B cell (primary cell): ENCODE measurements at regions of chr10 and their contacts with region 1.

Region 1: DNA sequence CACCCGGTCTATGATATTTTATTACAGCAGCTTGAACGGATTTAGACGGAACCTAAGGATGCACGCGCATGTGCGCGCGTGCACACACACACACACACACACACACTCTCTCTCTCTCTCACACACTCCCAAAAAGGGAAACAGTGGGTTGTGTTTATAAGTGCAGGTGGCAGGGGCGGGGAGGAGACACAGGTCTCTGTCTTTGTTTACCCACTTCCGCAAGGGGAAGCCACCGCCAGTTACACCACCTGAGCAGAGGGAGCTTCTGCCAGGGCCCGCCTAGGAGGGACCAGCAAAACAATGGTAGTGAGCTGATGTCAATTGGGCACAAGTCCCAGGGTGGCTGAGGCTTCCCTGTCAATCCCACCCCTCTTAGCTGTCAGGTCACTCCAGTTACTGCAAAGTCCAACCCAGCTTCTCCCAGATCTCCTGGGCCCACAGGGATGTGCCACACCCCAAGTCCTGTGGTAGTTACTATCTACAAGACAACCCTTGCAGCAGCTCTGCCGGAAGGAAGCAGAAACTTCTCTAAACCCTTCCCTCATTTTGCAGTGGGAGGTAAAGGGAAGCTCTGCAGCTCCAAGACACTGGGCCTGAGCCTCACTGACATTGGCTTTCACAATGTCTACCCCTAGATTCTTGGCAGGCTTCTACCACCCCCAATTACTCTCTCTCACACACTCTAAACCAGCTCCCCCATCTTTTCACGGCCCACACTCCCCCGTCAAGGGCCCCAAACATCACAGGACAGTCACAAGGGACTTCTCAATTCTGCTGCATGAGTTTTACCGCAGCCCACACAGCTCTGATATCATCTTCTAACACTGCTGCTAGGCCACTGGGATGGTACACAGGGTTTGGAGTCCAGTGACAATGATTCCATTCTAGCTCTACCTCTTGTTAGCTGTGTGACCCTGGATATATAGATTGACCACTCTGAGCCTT is 17.6 kb downstream of the ANXA11 start:
- DNase-seq: peak; percentile 94
- ATAC-seq: peak; percentile 91
- H3K4me3 ChIP-seq: peak overlapping the region; percentile 20 to 63 (median 43)
- H3K4me3 Mint-ChIP-seq: peak overlapping the region; percentile 78
- H3K27ac ChIP-seq: peak overlapping the region; percentile 94 to 96
- H3K27ac Mint-ChIP-seq: peak overlapping the region; percentile 94
- H3K4me1 ChIP-seq: peaks cover 63% of the 10 kb centered on the region in 2 donors
- H3K4me1 Mint-ChIP-seq: peaks cover 79% of the 10 kb centered on the region
- H3K27me3 ChIP-seq: no peaks in the 10 kb centered on the region
- H3K27me3 Mint-ChIP-seq: no peaks in the 10 kb centered on the region
- CTCF ChIP-seq: no peak

Region 2: GRCh38 chr10:79310911-79311573 is 876.7 kb before region 1 on chr10:
- CTCF ChIA-PET with region 1: no interaction called
- POLR2A ChIA-PET with region 1: no interaction called
- intact Hi-C with region 1: no loop called
- DNase-seq: no peak
- ATAC-seq: no peak
- H3K4me3 ChIP-seq: no peak overlapping the region
- H3K4me3 Mint-ChIP-seq: no peak overlapping the region
- H3K27ac ChIP-seq: no peak overlapping the region
- H3K27ac Mint-ChIP-seq: no peak overlapping the region
- H3K4me1 ChIP-seq: no peaks in the 10 kb centered on the region
- H3K4me1 Mint-ChIP-seq: peaks cover 3% of the 10 kb centered on the region
- H3K27me3 ChIP-seq: no peaks in the 10 kb centered on the region
- H3K27me3 Mint-ChIP-seq: no peaks in the 10 kb centered on the region
- CTCF ChIP-seq: no peak

Region 3: DNA sequence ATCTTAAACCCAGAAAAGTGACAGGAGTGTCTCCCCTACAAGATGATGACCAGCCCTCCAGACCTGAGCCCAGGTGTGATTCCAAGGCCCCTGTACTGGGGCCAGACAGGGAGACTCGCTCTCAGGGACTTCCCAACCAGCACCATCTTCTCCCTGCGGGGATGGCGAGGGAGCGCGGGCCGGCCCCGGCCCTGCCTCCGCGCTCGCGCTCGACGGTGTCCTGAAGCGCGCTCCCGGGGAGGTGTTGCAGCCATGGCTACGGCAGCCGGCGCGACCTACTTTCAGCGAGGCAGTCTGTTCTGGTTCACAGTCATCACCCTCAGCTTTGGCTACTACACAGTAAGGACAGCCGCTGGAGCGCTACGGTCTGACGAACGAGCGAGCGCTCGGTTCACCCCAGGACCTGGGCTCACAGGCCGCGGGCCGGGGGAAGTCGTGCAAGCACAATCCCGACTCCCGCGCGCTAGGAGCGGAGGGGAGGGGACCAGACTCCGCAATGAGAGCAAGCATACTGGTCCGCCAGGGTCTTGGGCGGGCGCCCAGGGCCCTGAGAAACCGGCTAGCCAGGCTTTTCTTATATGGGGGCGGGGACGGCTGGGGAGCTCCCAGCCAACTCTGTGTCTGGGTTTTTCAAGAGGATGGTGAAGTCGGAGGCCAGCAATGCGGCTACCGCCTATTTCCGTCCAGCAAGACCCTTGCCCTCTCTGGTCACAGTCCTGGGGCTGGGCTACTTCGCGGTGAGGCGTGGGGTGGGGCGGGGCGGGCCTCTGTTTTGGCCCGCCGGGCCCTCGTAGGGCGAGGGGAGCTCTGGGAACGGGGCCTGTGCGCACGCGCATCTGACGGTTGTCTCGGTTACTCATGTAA is 109.1 kb before region 1 on chr10 and contains the start of gene TMEM254:
- CTCF ChIA-PET with region 1: no interaction called
- POLR2A ChIA-PET with region 1: interaction called, 5 read pairs
- intact Hi-C with region 1: loop called (anchors 1 kb)
- DNase-seq: peak; percentile 92
- ATAC-seq: peak; percentile 86
- H3K4me3 ChIP-seq: peak within 1 kb of the TSS; percentile 74 to 98 (median 97)
- H3K4me3 Mint-ChIP-seq: peak within 1 kb of the TSS; percentile 97
- H3K27ac ChIP-seq: peak within 1 kb of the TSS; percentile 84 to 90
- H3K27ac Mint-ChIP-seq: peak within 1 kb of the TSS; percentile 92
- H3K4me1 ChIP-seq: peaks cover 11 to 15% of the 10 kb centered on the region in 2 donors
- H3K4me1 Mint-ChIP-seq: peaks cover 16% of the 10 kb centered on the region
- H3K27me3 ChIP-seq: no peaks in the 10 kb centered on the region
- H3K27me3 Mint-ChIP-seq: no peaks in the 10 kb centered on the region
- CTCF ChIP-seq: no peak
- total RNA-seq, gene TMEM254: 13.1 and 13.7 TPM in 2 replicates

Region 4: DNA sequence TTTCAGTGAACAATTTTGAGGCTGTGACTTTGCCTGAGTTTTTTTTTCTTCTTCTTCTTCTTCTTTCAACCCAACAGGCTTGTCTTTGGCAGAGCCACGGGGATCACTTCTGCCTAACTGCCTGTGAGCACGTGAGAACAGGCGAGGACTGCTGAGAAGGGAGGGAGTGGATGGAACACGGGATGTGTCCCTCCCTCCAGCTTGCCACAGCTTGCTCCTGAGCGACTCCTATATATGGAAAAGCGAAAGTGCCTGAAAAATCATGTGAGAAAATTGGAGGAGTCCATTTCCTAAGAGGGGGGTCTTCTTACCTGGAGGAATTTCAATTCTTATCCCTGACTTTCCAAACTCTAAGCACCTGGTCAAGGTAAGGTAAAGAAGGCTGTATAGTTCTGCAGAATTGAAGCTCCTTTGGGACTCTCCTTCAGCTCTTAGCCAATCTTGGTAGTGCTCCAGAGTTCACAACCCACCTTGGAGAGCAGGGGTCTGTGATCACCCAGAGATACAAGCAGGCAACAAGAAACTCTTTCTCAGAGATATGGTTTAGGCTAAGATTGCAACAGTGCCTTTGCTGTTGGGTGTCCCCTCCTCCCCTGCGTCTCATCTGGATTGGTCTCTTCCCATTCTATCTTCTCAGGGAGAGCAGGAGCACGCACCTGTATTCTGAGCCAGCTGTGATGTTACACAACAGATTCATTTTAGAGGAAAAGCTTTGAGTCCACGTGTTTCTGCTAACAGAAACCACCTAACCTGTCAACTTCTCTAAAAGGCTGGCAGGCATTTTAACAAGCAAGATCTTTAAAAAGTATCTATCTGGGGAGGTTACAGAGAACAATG is 101.9 kb after region 1 on chr10 and contains the start of gene MAT1A:
- CTCF ChIA-PET with region 1: no interaction called
- POLR2A ChIA-PET with region 1: no interaction called
- intact Hi-C with region 1: no loop called
- DNase-seq: no peak
- ATAC-seq: no peak
- H3K4me3 ChIP-seq: no peak within 1 kb of the TSS
- H3K4me3 Mint-ChIP-seq: no peak within 1 kb of the TSS
- H3K27ac ChIP-seq: no peak within 1 kb of the TSS
- H3K27ac Mint-ChIP-seq: no peak within 1 kb of the TSS
- H3K4me1 ChIP-seq: no peaks in the 10 kb centered on the region
- H3K4me1 Mint-ChIP-seq: no peaks in the 10 kb centered on the region
- H3K27me3 ChIP-seq: peaks cover 0 to 6% (median 0%) of the 10 kb centered on the region in 4 experiments
- H3K27me3 Mint-ChIP-seq: peaks cover 34% of the 10 kb centered on the region
- CTCF ChIP-seq: no peak
- total RNA-seq, gene MAT1A: not detected in 2 replicates